A549 (cell line): ENCODE measurements at regions of chr9 and their contacts with region 1.

Region 1: GRCh38 chr9:128927731-128928411 is 7.1 kb downstream of the PHYHD1 start:
- DNase-seq: peak; percentile 70 to 83
- ATAC-seq: peak; percentile 93 to 94
- H3K4me3 ChIP-seq: no peak overlapping the region
- H3K27ac ChIP-seq: peak overlapping the region; percentile 65 to 72; a peak in 5 of 6 replicates
- H3K4me1 ChIP-seq: peaks cover 4% of the 10 kb centered on the region
- CTCF ChIP-seq: peak; percentile 93
- EP300 ChIP-seq: no peak
- POLR2A ChIP-seq: no peak
- RAD21 ChIP-seq: peak; percentile 98 to 99

Region 2: DNA sequence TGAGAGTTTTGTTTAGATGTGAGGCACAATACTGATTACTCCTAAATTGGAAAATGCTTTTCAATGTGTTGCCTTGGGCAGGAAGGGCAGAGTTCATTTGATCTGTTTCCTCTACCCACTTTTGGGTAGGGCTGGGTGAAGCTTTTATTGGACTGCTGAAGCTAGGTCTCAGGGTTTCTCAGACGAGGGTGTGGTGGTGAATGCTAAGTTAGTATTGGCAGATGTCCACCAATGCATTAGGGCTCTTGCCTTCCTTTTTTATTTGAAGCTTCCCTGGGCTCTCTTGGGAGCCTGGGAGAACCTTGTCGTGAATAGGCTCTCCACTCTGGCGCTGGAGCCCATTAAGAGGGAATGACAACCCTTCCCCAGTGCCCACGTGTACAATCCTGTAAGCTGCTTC is 352.4 kb before region 1 on chr9:
- CTCF ChIA-PET with region 1: no interaction called
- POLR2A ChIA-PET with region 1: no interaction called
- DNase-seq: no peak
- ATAC-seq: no peak
- H3K4me3 ChIP-seq: no peak overlapping the region
- H3K27ac ChIP-seq: no peak overlapping the region
- H3K4me1 ChIP-seq: no peaks in the 10 kb centered on the region
- CTCF ChIP-seq: no peak
- EP300 ChIP-seq: no peak
- POLR2A ChIP-seq: no peak
- RAD21 ChIP-seq: no peak

Region 3: DNA sequence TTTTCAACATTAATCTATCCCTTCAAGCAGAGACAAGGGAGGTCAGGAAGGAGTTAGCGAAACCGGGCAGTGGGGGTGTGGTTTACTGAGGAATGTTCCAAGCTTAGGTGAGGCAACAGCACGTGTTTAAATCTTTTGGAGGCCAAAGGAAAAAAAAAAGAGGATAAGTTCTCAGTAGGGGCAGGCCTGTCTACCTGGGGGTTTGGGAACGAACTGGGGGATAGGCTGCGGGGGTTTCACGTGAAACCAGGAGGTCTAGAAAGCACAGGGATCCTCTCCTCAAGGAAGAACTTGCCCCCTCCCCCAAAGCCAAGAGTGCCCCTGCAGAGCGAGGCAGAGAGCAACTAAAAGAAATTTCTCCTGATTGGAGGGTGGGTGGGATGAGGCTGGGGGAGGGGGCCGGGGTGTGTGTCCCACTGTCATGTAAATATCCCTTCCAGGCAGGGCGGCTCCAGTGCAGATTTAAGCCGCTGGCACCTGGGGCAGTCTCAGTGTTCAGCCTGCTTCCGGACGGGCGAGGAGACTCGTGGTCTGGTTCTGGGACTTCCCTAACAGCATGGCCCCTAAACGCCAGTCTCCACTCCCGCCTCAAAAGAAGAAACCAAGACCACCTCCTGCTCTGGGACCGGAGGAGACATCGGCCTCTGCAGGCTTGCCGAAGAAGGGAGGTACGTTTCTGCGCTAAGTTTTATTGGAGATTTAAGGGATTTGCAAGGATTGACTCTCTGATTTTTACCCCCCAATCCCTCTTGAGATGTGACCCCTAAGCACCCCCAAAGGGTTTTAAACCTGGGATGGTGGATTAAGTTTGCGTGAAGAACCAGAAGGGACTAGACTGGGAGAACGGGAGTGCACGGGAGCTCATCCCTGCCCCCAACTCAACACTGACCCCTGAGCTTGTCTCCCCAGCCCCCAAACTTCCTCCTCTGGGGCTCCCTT is 244.3 kb before region 1 on chr9:
- CTCF ChIA-PET with region 1: no interaction called
- POLR2A ChIA-PET with region 1: no interaction called
- DNase-seq: peak; percentile 55 to 56
- ATAC-seq: peak; percentile 55 to 67; a peak in 5 of 6 replicates
- H3K4me3 ChIP-seq: peak overlapping the region; percentile 69
- H3K27ac ChIP-seq: peak overlapping the region; percentile 97 to 98
- H3K4me1 ChIP-seq: peaks cover 34% of the 10 kb centered on the region
- CTCF ChIP-seq: no peak
- EP300 ChIP-seq: no peak
- POLR2A ChIP-seq: peak; percentile 54
- RAD21 ChIP-seq: no peak

Region 4: GRCh38 chr9:128733256-128733655 is 194.6 kb before region 1 on chr9:
- CTCF ChIA-PET with region 1: interaction called, 37 read pairs
- POLR2A ChIA-PET with region 1: no interaction called
- DNase-seq: peak; percentile 96 to 97
- ATAC-seq: peak; percentile 98 to 99
- H3K4me3 ChIP-seq: no peak overlapping the region
- H3K27ac ChIP-seq: peak overlapping the region; percentile 41 to 73; a peak in 5 of 6 replicates
- H3K4me1 ChIP-seq: no peaks in the 10 kb centered on the region
- CTCF ChIP-seq: peak; percentile 94
- EP300 ChIP-seq: no peak
- POLR2A ChIP-seq: no peak
- RAD21 ChIP-seq: peak; percentile 83 to 88

Region 5: GRCh38 chr9:128845155-128845931 is 82.5 kb before region 1 on chr9:
- CTCF ChIA-PET with region 1: interaction called, 50 read pairs
- POLR2A ChIA-PET with region 1: no interaction called
- DNase-seq: no peak
- ATAC-seq: peak; percentile 78 to 86
- H3K4me3 ChIP-seq: no peak overlapping the region
- H3K27ac ChIP-seq: no peak overlapping the region
- H3K4me1 ChIP-seq: no peaks in the 10 kb centered on the region
- CTCF ChIP-seq: no peak
- EP300 ChIP-seq: no peak
- POLR2A ChIP-seq: no peak
- RAD21 ChIP-seq: no peak

Region 6: DNA sequence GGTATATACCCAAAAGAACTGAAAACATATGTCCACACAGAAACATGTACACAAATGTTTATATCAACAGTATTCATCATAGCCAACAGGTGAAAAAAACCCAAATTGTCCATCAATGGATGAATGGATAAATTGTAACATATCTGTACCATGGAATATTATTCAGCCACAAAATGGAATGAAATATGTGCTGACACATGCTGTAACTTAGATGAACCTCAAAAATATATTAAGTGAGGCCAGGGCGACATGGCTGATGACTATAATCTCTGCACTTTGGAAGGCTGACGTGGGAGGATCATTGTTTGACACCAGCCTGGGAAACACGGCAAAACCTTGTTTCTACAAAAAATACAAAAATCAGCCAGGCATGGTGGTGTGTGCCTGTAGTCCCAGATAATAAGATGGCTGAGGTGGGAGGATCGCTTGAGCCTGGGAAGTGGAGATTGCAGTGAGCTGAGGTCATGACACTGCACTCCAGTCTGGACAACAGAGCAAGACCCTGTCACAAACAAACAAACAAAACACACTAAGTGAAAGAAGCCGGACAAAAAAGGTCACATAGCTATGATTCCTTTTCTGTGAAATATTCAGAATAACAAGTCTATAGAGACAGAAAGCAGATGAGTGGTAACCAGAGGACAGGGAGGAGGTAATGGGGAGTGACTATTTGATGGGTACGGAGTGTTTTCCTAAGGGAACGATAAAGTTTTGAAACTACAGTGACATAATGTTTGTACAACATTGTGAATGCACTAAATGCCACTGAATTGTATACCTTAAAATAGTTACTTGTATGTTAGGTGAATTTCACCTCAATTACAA is 57.5 kb before region 1 on chr9:
- CTCF ChIA-PET with region 1: interaction called, 244 read pairs
- POLR2A ChIA-PET with region 1: no interaction called
- DNase-seq: no peak
- ATAC-seq: peak in 1 of 2 experiments; percentile 32; a peak in 2 of 6 replicates
- H3K4me3 ChIP-seq: no peak overlapping the region
- H3K27ac ChIP-seq: peak overlapping the region; percentile 2 to 57; a peak in 2 of 6 replicates
- H3K4me1 ChIP-seq: peaks cover 33% of the 10 kb centered on the region
- CTCF ChIP-seq: no peak
- EP300 ChIP-seq: no peak
- POLR2A ChIP-seq: no peak
- RAD21 ChIP-seq: no peak

Region 7: GRCh38 chr9:128887914-128888350 is 39.9 kb before region 1 on chr9:
- CTCF ChIA-PET with region 1: interaction called, 34 read pairs
- POLR2A ChIA-PET with region 1: no interaction called
- DNase-seq: no peak
- ATAC-seq: no peak
- H3K4me3 ChIP-seq: no peak overlapping the region
- H3K27ac ChIP-seq: peak overlapping the region in 1 of 2 experiments; percentile 13; a peak in 1 of 6 replicates
- H3K4me1 ChIP-seq: peaks cover 40% of the 10 kb centered on the region
- CTCF ChIP-seq: no peak
- EP300 ChIP-seq: no peak
- POLR2A ChIP-seq: no peak
- RAD21 ChIP-seq: no peak

Region 8: DNA sequence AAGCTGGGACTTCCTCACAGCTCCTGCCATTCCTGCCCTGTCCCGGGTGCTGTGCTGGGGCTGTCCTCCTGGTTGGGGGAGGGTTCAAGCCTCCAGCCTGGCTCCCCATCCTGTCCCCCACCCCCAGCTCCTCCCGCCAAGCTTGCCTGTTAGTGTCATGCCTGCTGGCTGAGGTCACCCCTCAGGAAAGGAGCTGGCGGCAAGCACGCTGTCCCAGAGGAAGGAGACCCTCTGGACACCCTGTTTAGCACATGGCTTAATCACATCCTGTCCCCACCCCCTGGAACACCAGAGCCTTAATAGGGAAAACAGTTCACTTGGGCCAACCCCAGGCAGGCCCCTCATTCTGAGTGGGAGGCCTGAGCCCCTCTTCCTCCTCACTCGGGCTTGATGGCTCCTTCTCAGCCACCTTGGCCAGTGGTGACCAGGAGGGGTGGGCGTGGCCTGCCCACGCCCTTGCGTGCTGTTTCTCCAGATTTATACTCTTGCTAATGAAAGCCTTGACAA is 16.3 kb before region 1 on chr9:
- CTCF ChIA-PET with region 1: interaction called, 37 read pairs
- POLR2A ChIA-PET with region 1: no interaction called
- DNase-seq: peak; percentile 36 to 65
- ATAC-seq: peak; percentile 25 to 36; a peak in 5 of 6 replicates
- H3K4me3 ChIP-seq: peak overlapping the region; percentile 15; the same call in 1 of the 3 replicates
- H3K27ac ChIP-seq: peak overlapping the region; percentile 91 to 97
- H3K4me1 ChIP-seq: peaks cover 53% of the 10 kb centered on the region
- CTCF ChIP-seq: no peak
- EP300 ChIP-seq: peak in 1 of 2 experiments; percentile 8; a peak in 1 of 5 replicates
- POLR2A ChIP-seq: no peak
- RAD21 ChIP-seq: no peak